Activated CD4-positive, alpha-beta T cell treated with anti-CD3 and anti-CD28 coated beads for 36 hours (primary cell): ENCODE measurements at regions of chr6 and their contacts with region 1.

Region 1: DNA sequence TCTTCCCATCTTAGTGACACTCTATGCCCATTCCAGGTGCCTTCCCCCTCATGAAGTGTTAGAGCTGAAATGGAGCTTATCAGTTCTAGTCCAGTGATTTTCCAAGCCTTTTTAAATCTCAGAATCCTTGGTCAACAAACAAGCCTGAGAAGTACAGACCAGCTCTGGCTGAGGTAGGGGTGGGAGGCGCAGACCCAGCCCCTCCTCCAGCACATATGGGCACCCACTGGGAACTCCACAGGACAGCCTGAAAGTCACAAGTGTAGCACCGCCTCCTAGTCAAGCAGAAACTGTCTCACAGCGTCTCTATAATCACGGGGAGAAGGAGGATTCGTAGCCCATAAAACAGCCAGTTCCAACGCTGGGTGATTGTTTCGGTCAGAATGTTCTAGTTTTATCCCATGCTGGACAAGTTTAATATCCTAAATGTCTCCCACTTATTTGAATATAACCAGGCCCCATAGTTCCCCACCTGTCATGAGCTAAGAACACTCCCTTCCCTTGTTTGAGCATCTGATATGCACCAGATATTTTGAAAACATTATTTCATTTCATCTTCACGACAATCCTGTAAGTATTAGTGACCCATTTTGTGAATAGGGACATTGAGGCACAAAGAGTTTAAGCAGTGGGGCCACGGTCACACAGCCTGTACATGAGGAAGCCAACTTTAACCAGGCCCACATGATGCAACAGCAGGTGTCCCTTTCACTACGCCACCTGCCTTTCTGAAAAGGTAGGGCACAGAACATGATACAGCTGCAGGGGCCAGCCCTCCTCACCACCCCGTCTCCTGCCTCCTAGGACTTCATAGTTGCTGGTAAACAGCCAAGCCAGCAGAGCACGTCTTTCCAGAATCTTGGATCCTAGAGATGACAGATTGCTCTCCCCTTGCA is 40.1 kb downstream of the TRAF3IP2 start:
- DNase-seq: peak; percentile 57
- ATAC-seq: peak; percentile 65
- H3K4me3 Mint-ChIP-seq: no peak overlapping the region
- H3K27ac Mint-ChIP-seq: peak overlapping the region; percentile 88
- H3K4me1 Mint-ChIP-seq: peaks cover 53% of the 10 kb centered on the region
- H3K27me3 Mint-ChIP-seq: no peaks in the 10 kb centered on the region

Region 2: DNA sequence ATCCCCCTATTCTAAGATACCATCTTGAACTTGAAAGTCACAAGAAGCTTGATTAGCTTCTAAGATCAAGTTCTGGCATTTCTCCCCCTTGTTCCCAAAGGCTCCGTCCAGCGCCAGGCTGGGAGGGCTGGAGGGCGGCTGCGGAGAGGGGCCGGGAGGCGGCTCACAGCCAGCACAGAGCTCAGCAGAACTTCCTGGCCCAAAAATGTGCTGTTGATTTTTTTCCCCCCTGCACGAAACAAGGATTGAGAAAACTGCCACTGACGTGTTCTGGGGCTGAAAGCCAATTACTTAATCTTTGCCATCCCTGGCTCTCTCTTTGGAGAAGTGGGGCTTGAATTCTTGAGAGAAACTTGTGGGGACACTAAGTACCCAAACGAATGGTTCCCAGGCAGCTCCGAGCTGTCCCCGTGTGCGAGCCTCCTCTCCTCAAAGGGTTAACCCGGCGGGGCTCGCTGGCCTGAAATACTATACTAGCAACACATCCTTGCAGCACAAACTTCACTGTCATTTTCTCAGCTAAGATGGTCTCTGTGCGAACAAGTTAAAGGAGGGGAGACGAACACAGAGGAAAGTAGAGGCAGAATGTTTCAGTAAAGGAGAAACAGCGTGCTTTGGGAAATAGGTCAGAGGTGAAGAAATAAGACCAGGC is 39.7 kb after region 1 on chr6:
- CTCF ChIA-PET with region 1: interaction called, 3 read pairs
- POLR2A ChIA-PET with region 1: no interaction called
- intact Hi-C with region 1: loop called in 1 of 2 experiments (anchors 1 kb)
- DNase-seq: peak; percentile 52
- ATAC-seq: peak; percentile 45
- H3K4me3 Mint-ChIP-seq: peak overlapping the region; percentile 80
- H3K27ac Mint-ChIP-seq: peak overlapping the region; percentile 99
- H3K4me1 Mint-ChIP-seq: peaks cover 39% of the 10 kb centered on the region
- H3K27me3 Mint-ChIP-seq: no peaks in the 10 kb centered on the region

Region 3: DNA sequence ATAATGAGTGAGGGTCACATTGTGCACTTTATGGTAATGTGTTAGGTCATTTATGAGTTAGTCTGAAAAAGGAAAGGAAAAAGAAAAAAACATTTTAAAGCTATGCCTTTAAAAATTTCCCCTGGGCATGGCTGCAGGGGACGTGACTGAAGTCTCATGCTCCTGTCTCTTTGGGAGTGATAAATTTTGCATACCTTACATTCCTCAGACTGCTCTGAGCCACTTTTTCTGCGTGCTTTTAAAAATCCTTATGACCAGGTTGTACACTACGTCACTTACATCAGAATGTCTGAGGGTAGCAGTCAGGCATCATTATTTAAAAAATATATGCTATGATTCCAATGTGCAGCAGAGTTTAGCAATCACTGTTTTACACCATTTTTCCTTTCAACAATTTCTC is 902.8 kb after region 1 on chr6:
- CTCF ChIA-PET with region 1: no interaction called
- POLR2A ChIA-PET with region 1: no interaction called
- intact Hi-C with region 1: no loop called
- DNase-seq: no peak
- ATAC-seq: no peak
- H3K4me3 Mint-ChIP-seq: no peak overlapping the region
- H3K27ac Mint-ChIP-seq: no peak overlapping the region
- H3K4me1 Mint-ChIP-seq: no peaks in the 10 kb centered on the region
- H3K27me3 Mint-ChIP-seq: peaks cover 2% of the 10 kb centered on the region

Region 4: GRCh38 chr6:112651239-112651638 is 1085.7 kb after region 1 on chr6:
- CTCF ChIA-PET with region 1: no interaction called
- POLR2A ChIA-PET with region 1: no interaction called
- intact Hi-C with region 1: no loop called
- DNase-seq: no peak
- ATAC-seq: no peak
- H3K4me3 Mint-ChIP-seq: no peak overlapping the region
- H3K27ac Mint-ChIP-seq: no peak overlapping the region
- H3K4me1 Mint-ChIP-seq: no peaks in the 10 kb centered on the region
- H3K27me3 Mint-ChIP-seq: peaks cover 1% of the 10 kb centered on the region